Heart right ventricle (tissue), 16 donors: ENCODE measurements at regions of chr20 and their contacts with region 1.

Region 1: GRCh38 chr20:44598423-44599305 is 16.3 kb downstream of the PKIG start:
- DNase-seq: peak; percentile 64 to 83
- ATAC-seq: peak; percentile 59 to 77 (median 71)
- H3K4me3 ChIP-seq: peak overlapping the region in 8 of 10 donors; percentile 12 to 49 (median 36)
- H3K27ac ChIP-seq: peak overlapping the region; percentile 55 to 98 (median 92)
- H3K4me1 ChIP-seq: peaks cover 45 to 100% (median 99%) of the 10 kb centered on the region in 9 donors
- H3K27me3 ChIP-seq: no peaks in the 10 kb centered on the region
- CTCF ChIP-seq: peak in 4 of 9 donors; percentile 21 to 38 (median 30)

Region 2: DNA sequence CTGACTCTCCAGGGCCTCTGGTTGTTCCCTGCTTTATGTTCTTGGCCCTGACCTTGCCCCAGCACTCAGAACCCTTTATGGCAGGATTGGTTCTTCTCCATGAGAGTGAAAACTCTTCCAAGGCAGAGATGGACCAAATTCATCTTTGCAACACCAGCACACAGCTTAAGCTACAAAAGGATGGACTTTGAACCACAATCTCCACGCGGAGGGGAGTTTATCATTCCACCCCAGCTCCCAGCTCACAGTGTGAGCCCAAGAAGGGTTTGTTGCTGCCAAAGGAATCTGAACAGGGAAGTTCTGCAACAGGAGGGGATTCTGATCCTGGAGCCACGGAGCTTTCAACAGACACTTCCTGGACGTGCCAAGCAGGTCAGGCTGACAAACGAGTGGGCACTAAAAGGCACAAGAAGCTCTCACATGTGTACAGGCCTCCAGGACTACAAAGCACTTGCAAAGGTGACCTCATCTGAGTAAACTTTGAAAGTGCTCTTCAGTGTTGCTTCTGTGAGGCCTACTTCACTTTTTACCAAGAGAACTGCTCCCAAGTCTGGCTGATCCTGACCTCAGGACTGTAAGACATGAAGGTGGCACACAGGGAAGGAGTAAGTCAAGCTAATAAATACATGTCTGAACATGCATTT is 296.5 kb before region 1 on chr20:
- intact Hi-C with region 1: no loop called
- DNase-seq: no peak
- ATAC-seq: peak in 6 of 8 donors; percentile 50 to 84 (median 64)
- H3K4me3 ChIP-seq: no peak overlapping the region
- H3K27ac ChIP-seq: peak overlapping the region; percentile 2 to 63 (median 45)
- H3K4me1 ChIP-seq: peaks cover 0 to 65% (median 28%) of the 10 kb centered on the region in 9 donors
- H3K27me3 ChIP-seq: no peaks in the 10 kb centered on the region
- CTCF ChIP-seq: no peak

Region 3: DNA sequence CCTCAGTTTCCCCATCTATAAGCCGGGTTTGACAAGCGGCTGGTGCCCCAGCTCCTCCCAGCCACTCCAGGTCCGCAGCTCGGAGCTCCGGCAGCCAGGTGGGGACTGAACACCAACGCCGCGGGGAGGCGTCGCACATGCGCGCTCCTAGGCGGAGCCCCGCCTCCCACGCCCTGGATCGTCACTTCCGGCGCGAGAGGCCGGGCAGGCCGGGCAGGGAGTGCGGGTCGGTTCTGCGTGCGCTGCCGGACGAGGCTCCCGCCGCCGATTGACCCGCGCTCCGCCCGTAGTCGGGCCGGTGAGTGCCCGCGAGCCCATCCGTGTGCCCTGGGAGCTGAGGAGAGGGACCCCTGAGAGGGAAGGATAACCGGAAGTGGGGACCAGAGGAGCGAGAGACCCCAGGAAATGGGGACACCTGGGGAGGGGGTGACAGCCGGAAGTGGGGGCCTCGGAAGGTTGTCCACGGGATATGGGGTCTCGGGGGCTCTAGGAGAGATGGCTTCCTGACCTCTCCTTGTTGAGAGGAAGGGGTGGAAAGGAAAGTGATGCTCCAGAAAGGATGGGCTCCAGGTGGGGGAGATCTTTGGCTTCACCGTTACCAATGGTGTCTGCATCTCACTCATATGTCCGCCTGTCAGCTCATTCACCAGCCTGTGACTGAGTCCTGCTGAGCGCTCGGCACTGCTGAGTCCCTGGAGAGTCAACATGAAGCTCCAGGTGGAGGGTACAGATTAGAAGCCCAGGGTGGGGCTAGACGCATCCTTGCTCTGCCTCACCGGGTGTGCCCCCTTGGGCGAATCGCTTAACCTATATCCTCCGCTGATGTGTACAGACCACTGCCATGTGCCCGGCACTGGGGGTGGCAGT is 122.7 kb before region 1 on chr20 and contains the start of gene TTPAL:
- intact Hi-C with region 1: loop called in 1 of 10 experiments (anchors 5 kb)
- DNase-seq: peak; percentile 85 to 89
- ATAC-seq: peak; percentile 97 to 99 (median 98)
- H3K4me3 ChIP-seq: peak within 1 kb of the TSS; percentile 43 to 82 (median 70)
- H3K27ac ChIP-seq: peak within 1 kb of the TSS; percentile 75 to 97 (median 89)
- H3K4me1 ChIP-seq: peaks cover 3 to 21% (median 12%) of the 10 kb centered on the region in 9 donors
- H3K27me3 ChIP-seq: no peaks in the 10 kb centered on the region
- CTCF ChIP-seq: peak in 7 of 9 donors; percentile 28 to 68 (median 42)
- total RNA-seq, gene TTPAL: 2.6 to 7.3 (median 4.7) TPM

Region 4: DNA sequence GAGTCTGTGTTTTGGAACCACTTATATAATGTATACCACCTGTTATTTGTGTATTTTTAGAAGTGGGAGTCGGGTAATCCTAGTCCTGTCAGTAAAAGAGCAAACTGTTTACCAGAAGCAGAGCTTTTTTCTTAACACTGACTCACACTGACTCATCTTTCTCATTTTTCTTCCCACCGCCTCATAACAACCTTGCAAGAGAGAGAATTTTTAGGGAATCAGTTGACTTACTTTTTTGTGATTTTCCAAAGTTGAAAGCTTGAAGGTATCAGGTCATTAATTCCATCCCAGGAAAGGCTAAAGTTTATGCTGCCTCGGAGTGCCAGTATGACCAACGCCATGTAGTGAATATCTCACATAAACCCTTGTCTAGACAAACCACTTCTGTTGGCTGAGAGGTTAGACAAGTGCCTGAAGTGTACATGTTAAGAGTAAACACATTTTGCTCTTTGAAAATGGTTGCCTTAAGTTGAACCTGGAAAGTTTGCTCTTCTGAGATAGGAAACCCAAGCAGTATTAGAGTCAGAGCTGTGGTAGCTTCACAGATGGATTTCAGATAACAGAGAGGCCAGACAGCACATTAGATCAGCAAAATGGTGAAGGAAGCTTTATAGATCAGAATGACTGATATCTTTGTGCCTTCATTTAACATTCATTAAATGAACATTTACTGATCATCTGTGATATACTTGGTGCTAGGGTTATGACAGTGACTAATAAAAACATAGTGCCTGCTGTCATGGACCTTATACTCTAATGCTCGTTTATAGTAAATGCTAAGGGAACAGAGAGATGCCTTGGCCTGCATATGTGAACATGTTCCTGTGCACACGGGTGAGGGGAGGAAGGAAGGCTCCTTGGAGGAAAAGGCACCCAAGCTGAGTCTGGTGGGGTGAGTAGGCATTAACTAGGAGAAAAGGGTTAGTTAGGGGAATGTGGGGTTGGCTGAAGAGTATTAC is 45.4 kb before region 1 on chr20:
- intact Hi-C with region 1: no loop called
- DNase-seq: no peak
- ATAC-seq: peak in 6 of 8 donors; percentile 22 to 84 (median 48)
- H3K4me3 ChIP-seq: no peak overlapping the region
- H3K27ac ChIP-seq: peak overlapping the region in 9 of 10 donors; percentile 2 to 81 (median 47)
- H3K4me1 ChIP-seq: peaks cover 6 to 62% (median 38%) of the 10 kb centered on the region in 9 donors
- H3K27me3 ChIP-seq: no peaks in the 10 kb centered on the region
- CTCF ChIP-seq: no peak

Region 5: GRCh38 chr20:44582311-44583025 is 16.2 kb before region 1 on chr20 and contains the start of gene PKIG:
- intact Hi-C with region 1: loop called in 5 of 10 experiments (anchors 1 to 2 kb)
- DNase-seq: peak in 1 of 2 donors; percentile 85
- ATAC-seq: peak; percentile 86 to 93 (median 90)
- H3K4me3 ChIP-seq: peak within 1 kb of the TSS; percentile 36 to 74 (median 62)
- H3K27ac ChIP-seq: peak within 1 kb of the TSS; percentile 87 to 98 (median 92)
- H3K4me1 ChIP-seq: peaks cover 18 to 87% (median 69%) of the 10 kb centered on the region in 9 donors
- H3K27me3 ChIP-seq: no peaks in the 10 kb centered on the region
- CTCF ChIP-seq: peak in 1 of 9 donors; percentile 9
- total RNA-seq, gene PKIG: 155 to 342 (median 231) TPM

Region 6: DNA sequence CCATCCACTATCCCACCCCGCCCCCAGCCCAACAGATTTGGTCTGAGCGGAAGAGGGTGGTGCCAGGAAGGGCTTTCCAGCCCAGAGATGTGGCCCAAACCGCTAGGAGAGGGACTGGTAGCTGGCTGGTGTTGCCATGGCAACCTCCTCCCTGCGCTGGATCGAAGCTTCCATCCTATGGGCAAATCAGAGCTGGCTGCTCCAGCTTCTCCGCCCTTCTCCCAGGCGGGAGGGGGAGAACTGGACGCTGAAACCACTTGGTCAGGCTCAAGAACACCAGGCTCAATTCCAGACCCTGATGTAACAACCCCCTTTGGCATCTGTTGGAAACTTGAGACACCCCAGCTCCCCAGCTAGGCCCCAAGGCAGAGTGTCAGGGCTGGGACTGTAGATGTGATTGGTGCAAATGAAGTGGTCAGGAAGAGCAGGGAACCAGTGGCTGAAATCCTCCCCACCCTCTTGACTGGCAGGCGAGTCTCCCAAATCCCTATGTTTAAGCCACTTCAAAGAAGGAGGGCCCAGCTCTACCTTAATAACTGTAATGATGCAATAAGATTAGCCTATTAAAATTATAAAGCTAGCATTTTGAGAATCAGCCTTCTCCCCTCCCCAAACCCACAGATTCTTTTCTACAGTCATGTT is 207.4 kb after region 1 on chr20:
- intact Hi-C with region 1: no loop called
- DNase-seq: peak in 1 of 2 donors; percentile 8
- ATAC-seq: peak in 3 of 8 donors; percentile 20 to 33 (median 26)
- H3K4me3 ChIP-seq: no peak overlapping the region
- H3K27ac ChIP-seq: no peak overlapping the region
- H3K4me1 ChIP-seq: peaks cover 0 to 5% (median 0%) of the 10 kb centered on the region in 9 donors
- H3K27me3 ChIP-seq: peaks cover 8 to 69% (median 57%) of the 10 kb centered on the region in 7 donors
- CTCF ChIP-seq: no peak